ENCODE measurements at regions of chr2 and their contacts with region 1.

Region 1: GRCh38 chr2:132477962-132478361 is 61.4 kb downstream of the GPR39 start:
- DNase-seq: no peak
- ATAC-seq: no peak
- H3K4me3 Mint-ChIP-seq: no peak overlapping the region
- H3K27ac Mint-ChIP-seq: no peak overlapping the region
- H3K4me1 Mint-ChIP-seq: no peaks in the 10 kb centered on the region
- H3K27me3 Mint-ChIP-seq: no peaks in the 10 kb centered on the region
- CTCF ChIP-seq: no peak

Region 2: DNA sequence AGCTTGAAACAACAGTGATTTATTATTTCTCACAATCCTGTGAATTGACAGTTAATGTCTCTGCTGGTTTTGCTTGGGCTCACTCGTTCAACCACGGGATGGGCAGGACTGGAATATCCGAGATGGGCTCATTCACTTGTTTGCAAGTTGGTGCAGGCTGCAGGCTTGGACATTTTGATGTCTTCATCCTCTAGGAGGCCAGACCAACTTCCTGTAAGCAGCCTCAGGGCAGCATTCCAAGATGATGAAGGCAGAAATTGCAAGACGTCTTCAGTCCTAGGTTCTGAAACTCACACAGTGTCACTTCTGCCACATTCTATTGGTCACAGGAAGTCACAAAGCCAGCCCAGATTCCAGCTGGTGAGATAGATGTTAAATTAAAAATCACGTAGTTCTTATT is 14.2 kb before region 1 on chr2:
- CTCF ChIA-PET with region 1: no interaction called
- POLR2A ChIA-PET with region 1: interaction called, 10 read pairs
- intact Hi-C with region 1: no loop called
- DNase-seq: no peak
- ATAC-seq: no peak
- H3K4me3 Mint-ChIP-seq: no peak overlapping the region
- H3K27ac Mint-ChIP-seq: no peak overlapping the region
- H3K4me1 Mint-ChIP-seq: no peaks in the 10 kb centered on the region
- H3K27me3 Mint-ChIP-seq: no peaks in the 10 kb centered on the region
- CTCF ChIP-seq: no peak